ENCODE measurements at regions of chr4 and their contacts with region 1.

Region 1: GRCh38 chr4:39970671-39971640 is 6.8 kb downstream of the PDS5A start:
- DNase-seq: peak; percentile 60 to 71
- H3K4me3 ChIP-seq: no peak overlapping the region
- H3K27ac ChIP-seq: 0 out of 2 replicates have a peak overlapping the region, but pooled peaks have one; percentile 27
- H3K4me1 ChIP-seq: peaks cover 8% of the 10 kb centered on the region
- H3K27me3 ChIP-seq: no peaks in the 10 kb centered on the region
- CTCF ChIP-seq: no peak

Region 2: DNA sequence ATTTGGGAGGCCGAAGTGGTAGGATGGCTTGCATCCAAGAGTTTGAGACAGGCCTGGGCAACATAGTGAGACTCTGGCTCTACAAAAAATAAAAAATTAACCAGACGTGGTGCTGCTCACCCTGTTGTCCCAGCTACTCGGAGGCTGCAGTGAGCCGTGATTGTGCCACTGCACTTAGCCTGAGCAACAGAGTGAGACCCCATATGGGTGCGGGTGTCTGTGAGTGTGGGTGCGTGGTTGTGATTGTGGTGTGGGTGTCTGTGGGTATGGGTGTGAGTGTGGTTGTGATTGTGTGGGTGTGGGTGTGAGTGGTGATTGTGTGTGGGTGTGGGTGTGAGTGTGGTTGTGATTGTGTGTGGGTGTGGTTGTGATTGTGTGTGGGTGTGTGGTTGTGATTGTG is 158.5 kb before region 1 on chr4:
- CTCF ChIA-PET with region 1: no interaction called
- POLR2A ChIA-PET with region 1: no interaction called
- intact Hi-C with region 1: no loop called
- DNase-seq: no peak
- H3K4me3 ChIP-seq: no peak overlapping the region
- H3K27ac ChIP-seq: no peak overlapping the region
- H3K4me1 ChIP-seq: no peaks in the 10 kb centered on the region
- H3K27me3 ChIP-seq: no peaks in the 10 kb centered on the region
- CTCF ChIP-seq: no peak

Region 3: DNA sequence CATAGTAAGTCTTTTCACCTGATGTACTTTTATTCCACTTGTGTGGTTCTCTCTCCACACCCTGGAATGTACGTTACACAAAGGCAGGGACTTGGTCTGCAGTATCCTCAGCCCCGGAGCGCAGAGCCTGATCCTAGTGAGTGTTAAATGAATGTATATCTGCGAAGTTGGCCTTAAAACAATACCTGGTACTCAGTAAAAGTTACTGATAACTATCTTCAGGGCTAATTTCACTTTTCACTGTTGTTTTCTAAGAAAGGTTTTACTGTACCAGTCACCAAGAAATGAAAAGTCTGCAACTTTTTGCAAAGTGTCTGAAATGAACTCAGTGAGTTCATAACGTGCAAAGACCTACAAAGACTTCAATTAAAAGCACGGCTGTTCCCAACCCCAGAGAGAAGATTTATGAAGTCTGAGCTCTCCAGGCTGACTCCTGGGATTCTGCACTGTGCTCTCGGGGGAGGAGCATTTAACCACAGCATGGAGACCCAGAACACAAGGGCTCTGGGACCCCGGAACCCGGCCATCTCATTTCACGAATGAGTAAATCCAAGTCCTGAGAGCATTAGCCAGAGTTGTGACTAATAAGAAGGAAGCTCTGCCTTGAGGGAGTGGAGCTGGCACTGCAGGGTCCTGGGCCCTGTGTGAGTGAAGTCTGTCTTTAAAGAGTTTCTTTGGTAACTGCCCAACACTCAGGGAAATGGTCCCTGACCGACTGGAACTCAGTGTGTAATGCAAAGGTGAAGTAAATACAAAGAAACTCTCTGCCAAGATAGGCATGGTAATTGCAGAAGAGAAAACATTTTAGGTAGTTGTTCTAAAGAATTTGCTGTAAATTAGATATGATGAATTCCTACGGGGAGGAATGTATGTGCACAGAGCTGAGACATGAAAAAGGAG is 944.6 kb after region 1 on chr4:
- CTCF ChIA-PET with region 1: no interaction called
- POLR2A ChIA-PET with region 1: interaction called, 16 read pairs
- intact Hi-C with region 1: no loop called
- DNase-seq: no peak
- H3K4me3 ChIP-seq: no peak overlapping the region
- H3K27ac ChIP-seq: no peak overlapping the region
- H3K4me1 ChIP-seq: no peaks in the 10 kb centered on the region
- H3K27me3 ChIP-seq: no peaks in the 10 kb centered on the region
- CTCF ChIP-seq: no peak

Measured in PC-9 (cell line).